Astrocyte of the cerebellum (primary cell): ENCODE measurements at regions of chr5 and their contacts with region 1.

Region 1: GRCh38 chr5:13987843-13988464 is 43.5 kb upstream of the DNAH5 start:
- DNase-seq: peak; percentile 56
- H3K4me3 ChIP-seq: no peak overlapping the region
- CTCF ChIP-seq: peak; percentile 77

Region 2: DNA sequence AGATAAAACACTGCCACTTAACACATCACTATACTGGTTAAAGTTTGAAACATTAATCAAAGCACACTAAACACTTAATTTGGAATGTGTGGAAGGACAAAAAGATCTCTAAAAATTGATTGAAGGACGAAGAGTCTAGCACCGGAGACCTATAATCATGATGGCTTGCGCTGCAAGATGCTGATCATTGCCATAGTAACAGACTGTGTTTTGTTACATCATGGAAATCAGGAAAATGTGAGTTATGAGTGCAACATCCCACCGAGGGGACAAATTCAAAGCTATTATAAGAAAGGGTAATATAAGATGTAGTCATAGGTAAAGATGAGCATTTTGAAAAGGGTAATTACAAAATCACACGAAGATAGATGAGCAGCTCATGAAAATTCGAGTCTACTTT is 1805.0 kb before region 1 on chr5:
- in situ Hi-C with region 1: no loop called
- DNase-seq: no peak
- H3K4me3 ChIP-seq: no peak overlapping the region
- CTCF ChIP-seq: no peak

Region 3: DNA sequence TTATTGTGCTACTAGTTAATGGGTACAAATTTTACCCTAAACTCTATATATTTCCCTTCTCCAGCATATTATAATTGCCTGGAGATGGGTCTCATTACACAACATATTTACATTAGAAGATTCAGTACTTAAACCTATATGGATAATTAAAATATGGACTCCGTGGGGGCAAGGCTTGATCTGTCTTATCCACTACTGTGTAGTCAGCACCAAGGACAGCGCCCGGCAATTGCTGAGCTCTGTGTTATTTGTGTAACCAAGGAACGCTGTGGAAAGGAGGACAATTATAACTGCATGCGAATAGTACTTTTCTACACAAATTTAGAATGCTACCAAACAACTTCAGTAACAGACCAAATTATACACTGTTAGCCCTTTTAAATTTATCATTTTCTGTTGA is 121.2 kb before region 1 on chr5:
- in situ Hi-C with region 1: no loop called
- DNase-seq: peak; percentile 28
- H3K4me3 ChIP-seq: no peak overlapping the region
- CTCF ChIP-seq: no peak

Region 4: GRCh38 chr5:13939638-13940037 is 48.3 kb before region 1 on chr5:
- in situ Hi-C with region 1: no loop called
- DNase-seq: no peak
- H3K4me3 ChIP-seq: no peak overlapping the region
- CTCF ChIP-seq: no peak

Region 5: GRCh38 chr5:14108170-14108996 is 120.4 kb after region 1 on chr5:
- in situ Hi-C with region 1: loop called (anchors 25 kb)
- DNase-seq: peak; percentile 64
- H3K4me3 ChIP-seq: no peak overlapping the region
- CTCF ChIP-seq: peak; percentile 72

Region 6: DNA sequence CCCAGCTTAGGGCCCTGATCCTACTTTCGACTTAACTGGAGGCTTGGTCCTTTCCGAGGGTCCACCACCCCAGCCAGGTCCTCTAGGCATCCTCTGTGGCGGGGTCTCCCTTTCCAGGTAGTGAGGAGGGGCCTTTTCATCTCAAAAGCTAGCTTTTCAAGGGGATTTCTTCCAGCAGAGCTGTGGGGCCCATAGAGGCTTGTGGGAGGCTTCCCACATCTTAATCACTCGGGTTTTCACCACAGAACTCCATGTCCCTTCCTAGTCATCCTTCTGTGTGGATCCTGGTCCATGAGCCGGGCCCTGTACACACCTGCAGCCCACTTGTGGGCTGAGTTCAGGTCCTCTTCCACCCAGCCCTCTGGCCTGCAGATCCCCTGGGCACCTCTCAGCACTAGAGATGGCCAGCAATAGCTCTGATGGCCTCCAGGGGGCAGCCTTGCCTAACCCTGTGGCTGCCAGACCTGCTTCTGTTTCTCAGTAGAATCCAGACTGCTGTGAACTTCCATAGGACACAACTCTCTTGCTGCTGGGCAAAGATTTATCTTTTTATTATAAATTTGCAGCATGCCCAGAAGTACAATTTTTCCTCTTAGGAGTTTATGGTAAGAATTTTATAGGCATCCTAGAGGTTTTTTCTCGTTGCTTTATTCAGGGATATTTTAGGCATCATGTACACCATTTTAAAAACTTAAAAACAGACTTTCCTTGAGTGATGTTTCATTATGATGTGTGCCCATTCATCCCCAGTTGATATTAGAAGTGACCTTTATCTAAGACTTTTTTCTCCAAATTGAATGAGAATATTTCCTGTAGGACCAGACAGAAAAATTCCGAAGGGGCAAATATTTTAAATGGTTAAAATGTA is 364.1 kb after region 1 on chr5:
- in situ Hi-C with region 1: loop called (anchors 25 kb)
- DNase-seq: peak; percentile 35
- H3K4me3 ChIP-seq: no peak overlapping the region
- CTCF ChIP-seq: peak; percentile 99

Region 7: DNA sequence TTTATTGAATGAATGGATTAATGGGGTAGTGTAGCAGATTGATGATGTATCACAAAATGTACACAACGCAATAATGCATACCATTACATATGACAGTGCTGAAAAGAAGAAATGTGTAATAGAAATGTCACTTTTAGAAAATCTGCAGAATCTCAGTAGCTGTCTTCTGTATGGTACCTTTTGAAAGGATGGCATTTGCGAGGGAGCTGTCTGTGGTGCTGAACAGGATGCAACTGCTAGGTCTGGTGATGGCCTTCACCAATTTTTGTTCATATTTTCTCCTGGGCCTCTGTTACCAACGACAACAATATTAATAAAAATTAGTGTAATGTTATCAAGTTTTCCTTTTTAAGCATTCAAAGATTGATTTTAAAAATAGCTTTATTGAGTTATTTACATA is 640.4 kb after region 1 on chr5:
- in situ Hi-C with region 1: loop called (anchors 25 kb)
- DNase-seq: peak; percentile 51
- H3K4me3 ChIP-seq: no peak overlapping the region
- CTCF ChIP-seq: no peak